ENCODE measurements at regions of chr1 and their contacts with region 1.

Region 1: DNA sequence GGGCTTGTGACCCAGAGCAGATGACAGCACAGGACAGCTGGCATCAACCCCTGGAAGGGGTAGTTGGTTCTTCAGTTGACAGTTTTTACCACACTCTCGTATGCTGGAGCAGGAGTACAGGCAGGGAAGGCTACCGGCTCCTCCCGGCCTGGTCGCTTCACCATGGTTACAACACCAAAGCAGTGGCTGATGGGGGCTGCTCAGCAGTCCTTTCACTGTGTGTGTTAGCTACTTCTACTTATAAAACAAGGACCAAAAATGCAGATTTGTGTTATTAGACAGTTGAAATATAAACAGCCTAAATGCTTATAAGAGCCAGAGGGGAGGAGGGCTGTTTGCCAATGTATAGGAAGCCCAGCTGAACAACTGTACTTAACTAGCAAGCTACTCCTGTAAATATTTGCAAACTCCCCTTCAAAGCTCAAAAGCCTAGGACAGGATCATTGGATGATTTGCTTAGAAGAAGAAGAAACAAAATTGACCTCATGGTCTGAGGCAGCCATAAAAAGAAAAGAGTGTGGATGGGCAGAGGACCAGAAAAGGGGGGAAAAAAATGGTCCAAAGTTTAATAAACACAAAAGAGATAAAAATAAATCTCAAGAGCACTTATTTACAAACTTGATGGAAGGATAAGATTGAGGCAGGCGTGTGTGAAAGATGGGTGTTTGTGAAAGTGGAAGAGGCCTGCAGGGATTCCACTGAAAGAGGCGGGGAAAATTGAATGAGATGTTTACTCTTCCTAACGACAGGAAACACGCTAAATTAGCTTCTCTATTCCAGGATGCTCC is 57.1 kb downstream of the TGFB2 start:
- DNase-seq: peak; percentile 85
- ATAC-seq: peak; percentile 91
- H3K4me3 ChIP-seq: peak overlapping the region in 1 of 3 experiments; percentile 38; a peak in 1 of 6 replicates
- H3K27ac ChIP-seq: peak overlapping the region; percentile 13
- H3K4me1 ChIP-seq: peaks cover 42% of the 10 kb centered on the region
- H3K27me3 ChIP-seq: peaks cover 0 to 2% of the 10 kb centered on the region in 2 experiments; a peak in 1 of 5 replicates
- CTCF ChIP-seq: no peak
- EP300 ChIP-seq: 0 out of 4 replicates have a peak, but pooled peaks of 1 of the 2 experiments have one; percentile 58
- POLR2A ChIP-seq: no peak
- RAD21 ChIP-seq: no peak

Region 2: DNA sequence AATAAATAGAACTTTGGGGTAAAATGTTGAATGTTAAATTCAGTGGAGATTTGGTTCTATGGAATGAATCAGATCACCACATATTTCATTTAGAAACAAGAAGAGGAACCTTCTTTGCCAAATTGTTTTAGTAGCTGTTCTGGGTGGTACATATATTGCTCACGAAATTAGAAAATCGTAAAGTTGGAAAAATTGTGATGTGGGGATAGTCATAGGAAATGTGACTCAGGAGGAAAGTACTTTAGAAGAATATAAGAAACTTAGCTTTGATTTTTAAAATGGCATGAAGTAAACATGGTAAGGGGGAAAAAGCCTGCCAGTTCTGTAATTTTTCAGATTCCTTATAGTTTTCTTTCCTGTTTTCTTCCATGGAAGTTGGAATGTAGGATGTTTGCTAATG is 89.7 kb before region 1 on chr1:
- CTCF ChIA-PET with region 1: no interaction called
- POLR2A ChIA-PET with region 1: no interaction called
- in situ Hi-C with region 1: no loop called
- intact Hi-C with region 1: no loop called
- DNase-seq: no peak
- ATAC-seq: no peak
- H3K4me3 ChIP-seq: no peak overlapping the region
- H3K27ac ChIP-seq: no peak overlapping the region
- H3K4me1 ChIP-seq: no peaks in the 10 kb centered on the region
- H3K27me3 ChIP-seq: no peaks in the 10 kb centered on the region
- CTCF ChIP-seq: no peak
- EP300 ChIP-seq: no peak
- POLR2A ChIP-seq: no peak
- RAD21 ChIP-seq: no peak

Region 3: DNA sequence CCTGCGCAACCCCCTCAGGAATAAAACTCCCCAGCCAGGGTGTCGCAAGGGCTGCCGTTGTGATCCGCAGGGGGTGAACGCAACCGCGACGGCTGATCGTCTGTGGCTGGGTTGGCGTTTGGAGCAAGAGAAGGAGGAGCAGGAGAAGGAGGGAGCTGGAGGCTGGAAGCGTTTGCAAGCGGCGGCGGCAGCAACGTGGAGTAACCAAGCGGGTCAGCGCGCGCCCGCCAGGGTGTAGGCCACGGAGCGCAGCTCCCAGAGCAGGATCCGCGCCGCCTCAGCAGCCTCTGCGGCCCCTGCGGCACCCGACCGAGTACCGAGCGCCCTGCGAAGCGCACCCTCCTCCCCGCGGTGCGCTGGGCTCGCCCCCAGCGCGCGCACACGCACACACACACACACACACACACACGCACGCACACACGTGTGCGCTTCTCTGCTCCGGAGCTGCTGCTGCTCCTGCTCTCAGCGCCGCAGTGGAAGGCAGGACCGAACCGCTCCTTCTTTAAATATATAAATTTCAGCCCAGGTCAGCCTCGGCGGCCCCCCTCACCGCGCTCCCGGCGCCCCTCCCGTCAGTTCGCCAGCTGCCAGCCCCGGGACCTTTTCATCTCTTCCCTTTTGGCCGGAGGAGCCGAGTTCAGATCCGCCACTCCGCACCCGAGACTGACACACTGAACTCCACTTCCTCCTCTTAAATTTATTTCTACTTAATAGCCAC is 56.4 kb before region 1 on chr1:
- CTCF ChIA-PET with region 1: no interaction called
- POLR2A ChIA-PET with region 1: no interaction called
- in situ Hi-C with region 1: no loop called
- intact Hi-C with region 1: loop called (anchors 1 kb)
- DNase-seq: peak; percentile 7
- ATAC-seq: peak; percentile 95
- H3K4me3 ChIP-seq: peak overlapping the region; percentile 56 to 78 (median 56)
- H3K27ac ChIP-seq: no peak overlapping the region
- H3K4me1 ChIP-seq: peaks cover 29% of the 10 kb centered on the region
- H3K27me3 ChIP-seq: peaks cover 2 to 41% of the 10 kb centered on the region in 2 experiments; a peak in 3 of 5 replicates
- CTCF ChIP-seq: 0 out of 2 replicates have a peak, but pooled peaks have one; percentile 11
- EP300 ChIP-seq: no peak
- POLR2A ChIP-seq: no peak
- RAD21 ChIP-seq: no peak

Region 4: GRCh38 chr1:218366322-218367052 is 35.7 kb before region 1 on chr1:
- CTCF ChIA-PET with region 1: no interaction called
- POLR2A ChIA-PET with region 1: no interaction called
- in situ Hi-C with region 1: no loop called
- intact Hi-C with region 1: loop called (anchors 1 kb)
- DNase-seq: peak; percentile 86
- ATAC-seq: peak; percentile 66
- H3K4me3 ChIP-seq: no peak overlapping the region; a peak in 1 of 6 replicates
- H3K27ac ChIP-seq: peak overlapping the region; percentile 54
- H3K4me1 ChIP-seq: peaks cover 68% of the 10 kb centered on the region
- H3K27me3 ChIP-seq: no peaks in the 10 kb centered on the region
- CTCF ChIP-seq: no peak
- EP300 ChIP-seq: peak in 1 of 2 experiments; percentile 45; a peak in 1 of 4 replicates
- POLR2A ChIP-seq: no peak
- RAD21 ChIP-seq: no peak

Region 5: GRCh38 chr1:218380151-218380977 is 21.8 kb before region 1 on chr1:
- CTCF ChIA-PET with region 1: no interaction called
- POLR2A ChIA-PET with region 1: interaction called, 3 read pairs
- in situ Hi-C with region 1: no loop called
- intact Hi-C with region 1: loop called (anchors 2 kb)
- DNase-seq: peak; percentile 87
- ATAC-seq: peak; percentile 92
- H3K4me3 ChIP-seq: no peak overlapping the region; a peak in 1 of 6 replicates
- H3K27ac ChIP-seq: peak overlapping the region; percentile 10
- H3K4me1 ChIP-seq: peaks cover 58% of the 10 kb centered on the region
- H3K27me3 ChIP-seq: no peaks in the 10 kb centered on the region
- CTCF ChIP-seq: no peak
- EP300 ChIP-seq: peak in 1 of 2 experiments; percentile 28; a peak in 1 of 4 replicates
- POLR2A ChIP-seq: no peak
- RAD21 ChIP-seq: no peak

Region 6: GRCh38 chr1:218426343-218426657 is 24.1 kb after region 1 on chr1:
- CTCF ChIA-PET with region 1: no interaction called
- POLR2A ChIA-PET with region 1: no interaction called
- in situ Hi-C with region 1: no loop called
- intact Hi-C with region 1: loop called (anchors 2 kb)
- DNase-seq: peak; percentile 95
- ATAC-seq: peak; percentile 95
- H3K4me3 ChIP-seq: 0 out of 6 replicates have a peak overlapping the region, but pooled peaks of 1 of the 3 experiments have one; percentile 26
- H3K27ac ChIP-seq: peak overlapping the region; percentile 58
- H3K4me1 ChIP-seq: peaks cover 22% of the 10 kb centered on the region
- H3K27me3 ChIP-seq: no peaks in the 10 kb centered on the region; a peak in 1 of 5 replicates
- CTCF ChIP-seq: no peak
- EP300 ChIP-seq: peak; percentile 65 to 84; a peak in 2 of 4 replicates
- POLR2A ChIP-seq: no peak
- RAD21 ChIP-seq: no peak